Activated CD4-positive, alpha-beta memory T cell treated with anti-CD3 and anti-CD28 coated beads, Interleukin-2, amount 10 ng/mL, durations not matched to agents 7 days and 5 days (primary cell): ENCODE measurements at regions of chr2 and their contacts with region 1.

Region 1: GRCh38 chr2:230738391-230738811 is 25.8 kb downstream of the CAB39 start:
- DNase-seq: no peak
- H3K4me3 Mint-ChIP-seq: no peak overlapping the region
- H3K27ac Mint-ChIP-seq: peak overlapping the region; percentile 12
- H3K4me1 Mint-ChIP-seq: peaks cover 68% of the 10 kb centered on the region
- H3K27me3 Mint-ChIP-seq: no peaks in the 10 kb centered on the region

Region 2: GRCh38 chr2:230721712-230722111 is 16.7 kb before region 1 on chr2:
- CTCF ChIA-PET with region 1: interaction called, 3 read pairs
- POLR2A ChIA-PET with region 1: interaction called, 12 read pairs
- DNase-seq: no peak
- H3K4me3 Mint-ChIP-seq: peak overlapping the region; percentile 38
- H3K27ac Mint-ChIP-seq: peak overlapping the region; percentile 79
- H3K4me1 Mint-ChIP-seq: peaks cover 79% of the 10 kb centered on the region
- H3K27me3 Mint-ChIP-seq: no peaks in the 10 kb centered on the region